Activated CD4-positive, alpha-beta memory T cell treated with anti-CD3 and anti-CD28 coated beads for 36 hours (primary cell): ENCODE measurements at regions of chr2 and their contacts with region 1.

Region 1: GRCh38 chr2:102449370-102449974 is 23.6 kb upstream of the SLC9A4 start:
- DNase-seq: peak; percentile 82
- H3K4me3 Mint-ChIP-seq: no peak overlapping the region
- H3K27ac Mint-ChIP-seq: no peak overlapping the region
- H3K4me1 Mint-ChIP-seq: no peaks in the 10 kb centered on the region
- H3K27me3 Mint-ChIP-seq: peaks cover 1% of the 10 kb centered on the region

Region 2: DNA sequence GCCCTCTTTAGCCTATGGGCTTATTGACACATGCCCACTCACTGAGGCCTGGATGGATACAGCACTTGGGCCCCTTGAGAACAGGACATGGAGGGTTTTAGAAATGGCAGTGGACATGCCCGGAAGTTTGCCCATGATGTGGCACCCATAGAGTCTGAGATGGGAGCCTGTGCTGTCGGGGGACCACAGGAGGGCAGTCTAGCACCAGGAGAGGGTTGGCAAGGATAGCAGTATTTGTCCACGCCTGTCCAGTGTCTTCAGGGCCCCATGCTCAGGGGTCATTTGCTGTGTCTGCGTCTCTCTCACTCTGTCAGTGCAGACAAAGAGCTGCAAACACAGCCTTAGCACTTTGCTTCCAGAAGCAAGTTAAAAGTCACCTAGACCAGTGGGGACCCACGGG is 214.0 kb before region 1 on chr2:
- CTCF ChIA-PET with region 1: interaction called, 56 read pairs
- POLR2A ChIA-PET with region 1: no interaction called
- intact Hi-C with region 1: loop called (anchors 1 kb)
- DNase-seq: peak; percentile 56
- H3K4me3 Mint-ChIP-seq: no peak overlapping the region
- H3K27ac Mint-ChIP-seq: peak overlapping the region; percentile 61
- H3K4me1 Mint-ChIP-seq: peaks cover 58% of the 10 kb centered on the region
- H3K27me3 Mint-ChIP-seq: peaks cover 2% of the 10 kb centered on the region

Region 3: DNA sequence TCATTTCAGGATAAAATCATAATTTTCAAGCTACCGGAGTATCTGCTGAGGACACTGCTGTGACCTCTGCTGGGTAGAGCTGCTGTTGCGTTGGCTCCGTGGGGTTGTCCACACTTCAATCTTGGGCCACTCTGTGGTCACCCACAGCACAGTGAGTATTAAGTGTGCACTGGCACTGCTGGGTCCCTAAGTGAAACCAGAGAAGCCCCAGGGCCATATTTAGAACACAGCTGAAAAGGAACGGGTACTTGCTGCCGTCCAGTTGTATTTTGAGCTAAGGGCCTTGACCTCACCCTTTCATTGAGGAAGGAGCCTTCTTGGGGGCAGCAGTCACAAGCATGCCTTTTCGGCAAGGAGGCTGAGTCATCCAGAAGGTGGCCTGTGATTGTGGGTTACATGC is 33.6 kb after region 1 on chr2:
- CTCF ChIA-PET with region 1: no interaction called
- POLR2A ChIA-PET with region 1: no interaction called
- intact Hi-C with region 1: no loop called
- DNase-seq: no peak
- H3K4me3 Mint-ChIP-seq: no peak overlapping the region
- H3K27ac Mint-ChIP-seq: no peak overlapping the region
- H3K4me1 Mint-ChIP-seq: peaks cover 10% of the 10 kb centered on the region
- H3K27me3 Mint-ChIP-seq: peaks cover 15% of the 10 kb centered on the region